CD4-positive, alpha-beta memory T cell (primary cell): ENCODE measurements at regions of chr1 and their contacts with region 1.

Region 1: DNA sequence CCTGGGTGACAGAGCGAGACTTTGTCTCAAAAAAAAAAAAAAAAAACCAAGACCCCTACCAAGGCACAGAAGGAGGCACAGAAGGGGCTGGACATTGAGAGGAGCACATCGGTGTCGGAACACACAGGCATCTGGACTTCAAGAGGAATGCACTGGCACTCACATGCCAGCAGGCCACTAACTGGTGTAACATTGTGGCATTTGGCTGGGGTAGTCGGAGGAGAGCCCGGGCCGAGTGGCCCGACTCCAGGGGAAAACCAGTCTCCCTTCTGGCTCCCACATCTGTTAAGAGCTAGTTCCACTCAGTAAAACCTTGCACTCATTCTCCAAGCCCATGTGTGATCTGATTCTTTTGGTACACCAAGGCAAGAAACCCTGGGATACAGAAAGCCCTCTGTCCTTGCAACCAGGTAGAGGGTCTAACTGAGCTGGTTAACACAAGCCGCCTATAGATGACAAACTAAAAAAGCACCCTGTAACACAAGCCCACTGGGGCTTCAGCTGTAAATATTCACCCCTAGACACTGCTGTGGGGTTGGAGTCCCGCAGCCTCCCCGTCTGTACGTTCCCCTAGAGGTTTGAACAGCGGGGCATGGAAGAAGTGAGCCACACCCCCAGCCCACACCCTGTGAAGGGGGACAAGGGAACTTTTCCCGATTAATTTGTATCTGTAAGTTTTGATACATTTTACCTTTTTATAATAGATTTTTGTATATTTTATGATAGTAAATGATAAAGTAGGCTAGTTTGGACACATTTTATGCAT is 17.2 kb upstream of the AKIRIN1 start:
- DNase-seq: no peak
- H3K4me3 ChIP-seq: no peak overlapping the region
- H3K4me3 Mint-ChIP-seq: no peak overlapping the region
- H3K27ac ChIP-seq: no peak overlapping the region
- H3K27ac Mint-ChIP-seq: peak overlapping the region in 1 of 7 donors; percentile 6
- H3K4me1 ChIP-seq: peaks cover 10% of the 10 kb centered on the region
- H3K4me1 Mint-ChIP-seq: peaks cover 12 to 24% (median 17%) of the 10 kb centered on the region in 4 donors
- H3K27me3 ChIP-seq: no peaks in the 10 kb centered on the region
- H3K27me3 Mint-ChIP-seq: peaks cover 0 to 2% of the 10 kb centered on the region in 2 donors

Region 2: GRCh38 chr1:38859561-38860453 is 114.0 kb before region 1 on chr1 and contains the start of gene RRAGC:
- CTCF ChIA-PET with region 1: no interaction called
- POLR2A ChIA-PET with region 1: interaction called, 9 read pairs
- intact Hi-C with region 1: loop called (anchors 1 kb)
- DNase-seq: peak; percentile 97 to 99 (median 97)
- H3K4me3 ChIP-seq: peak within 1 kb of the TSS; percentile 70 to 92
- H3K4me3 Mint-ChIP-seq: peak within 1 kb of the TSS; percentile 91 to 97 (median 96)
- H3K27ac ChIP-seq: peak within 1 kb of the TSS; percentile 65
- H3K27ac Mint-ChIP-seq: peak within 1 kb of the TSS; percentile 88 to 98 (median 94)
- H3K4me1 ChIP-seq: peaks cover 35% of the 10 kb centered on the region
- H3K4me1 Mint-ChIP-seq: peaks cover 37 to 77% (median 57%) of the 10 kb centered on the region in 4 donors
- H3K27me3 ChIP-seq: no peaks in the 10 kb centered on the region
- H3K27me3 Mint-ChIP-seq: no peaks in the 10 kb centered on the region
- total RNA-seq, gene RRAGC: 24.5 to 25.2 TPM

Region 3: GRCh38 chr1:38873027-38873969 is 100.5 kb before region 1 on chr1 and contains the start of gene MYCBP:
- CTCF ChIA-PET with region 1: no interaction called
- POLR2A ChIA-PET with region 1: interaction called, 8 read pairs
- intact Hi-C with region 1: loop called (anchors 5 kb)
- DNase-seq: peak; percentile 96 to 99 (median 98)
- H3K4me3 ChIP-seq: peak within 1 kb of the TSS; percentile 77 to 81
- H3K4me3 Mint-ChIP-seq: peak within 1 kb of the TSS; percentile 88 to 95 (median 92)
- H3K27ac ChIP-seq: peak within 1 kb of the TSS; percentile 79
- H3K27ac Mint-ChIP-seq: peak within 1 kb of the TSS; percentile 88 to 94 (median 93)
- H3K4me1 ChIP-seq: peaks cover 35% of the 10 kb centered on the region
- H3K4me1 Mint-ChIP-seq: peaks cover 16 to 34% (median 25%) of the 10 kb centered on the region in 4 donors
- H3K27me3 ChIP-seq: no peaks in the 10 kb centered on the region
- H3K27me3 Mint-ChIP-seq: no peaks in the 10 kb centered on the region
- total RNA-seq, gene MYCBP: 13.4 to 15.4 TPM

Region 4: DNA sequence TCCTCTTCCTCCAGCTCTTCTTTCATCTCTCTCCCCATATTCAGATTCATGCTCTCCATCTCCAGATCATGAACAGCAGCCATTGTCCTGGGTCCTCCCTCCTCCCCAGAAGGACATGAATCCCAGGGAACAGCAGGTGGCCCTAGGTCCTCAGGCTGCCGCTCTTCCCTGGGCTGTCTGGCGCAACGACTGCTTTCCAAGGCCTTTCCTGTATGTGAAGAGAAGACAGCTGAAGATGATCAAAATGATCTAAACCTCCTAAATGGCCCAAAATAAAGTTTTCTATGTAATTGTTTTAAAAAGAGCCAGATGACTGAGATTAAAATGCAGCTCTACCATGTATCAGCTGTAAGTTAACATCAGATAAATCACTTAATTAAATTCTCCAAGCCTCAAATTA is 54.7 kb before region 1 on chr1:
- CTCF ChIA-PET with region 1: no interaction called
- POLR2A ChIA-PET with region 1: no interaction called
- intact Hi-C with region 1: no loop called
- DNase-seq: no peak
- H3K4me3 ChIP-seq: no peak overlapping the region
- H3K4me3 Mint-ChIP-seq: no peak overlapping the region
- H3K27ac ChIP-seq: no peak overlapping the region
- H3K27ac Mint-ChIP-seq: peak overlapping the region in 1 of 7 donors; percentile 19
- H3K4me1 ChIP-seq: no peaks in the 10 kb centered on the region
- H3K4me1 Mint-ChIP-seq: peaks cover 0 to 1% (median 0%) of the 10 kb centered on the region in 4 donors
- H3K27me3 ChIP-seq: no peaks in the 10 kb centered on the region
- H3K27me3 Mint-ChIP-seq: no peaks in the 10 kb centered on the region

Region 5: GRCh38 chr1:38990738-38991639 is 17.1 kb after region 1 on chr1 and contains the start of gene AKIRIN1:
- CTCF ChIA-PET with region 1: interaction called, 5 read pairs
- POLR2A ChIA-PET with region 1: interaction called, 28 read pairs
- intact Hi-C with region 1: loop called (anchors 2 kb)
- DNase-seq: peak; percentile 87 to 95 (median 89)
- H3K4me3 ChIP-seq: peak within 1 kb of the TSS; percentile 52 to 67
- H3K4me3 Mint-ChIP-seq: peak within 1 kb of the TSS; percentile 88 to 94 (median 92)
- H3K27ac ChIP-seq: peak within 1 kb of the TSS; percentile 93
- H3K27ac Mint-ChIP-seq: peak within 1 kb of the TSS; percentile 87 to 93 (median 91)
- H3K4me1 ChIP-seq: peaks cover 47% of the 10 kb centered on the region
- H3K4me1 Mint-ChIP-seq: peaks cover 21 to 52% (median 37%) of the 10 kb centered on the region in 4 donors
- H3K27me3 ChIP-seq: no peaks in the 10 kb centered on the region
- H3K27me3 Mint-ChIP-seq: no peaks in the 10 kb centered on the region
- total RNA-seq, gene AKIRIN1: 79.6 to 84.9 TPM

Region 6: GRCh38 chr1:38997034-38997900 is 23.4 kb after region 1 on chr1:
- CTCF ChIA-PET with region 1: interaction called, 5 read pairs
- POLR2A ChIA-PET with region 1: interaction called, 28 read pairs
- intact Hi-C with region 1: loop called (anchors 2 kb)
- DNase-seq: peak in 4 of 5 donors; percentile 55 to 63 (median 60)
- H3K4me3 ChIP-seq: peak overlapping the region; percentile 3 to 11
- H3K4me3 Mint-ChIP-seq: peak overlapping the region; percentile 69 to 92 (median 86)
- H3K27ac ChIP-seq: peak overlapping the region; percentile 22
- H3K27ac Mint-ChIP-seq: peak overlapping the region; percentile 82 to 94 (median 91)
- H3K4me1 ChIP-seq: peaks cover 74% of the 10 kb centered on the region
- H3K4me1 Mint-ChIP-seq: peaks cover 40 to 82% (median 59%) of the 10 kb centered on the region in 4 donors
- H3K27me3 ChIP-seq: no peaks in the 10 kb centered on the region
- H3K27me3 Mint-ChIP-seq: no peaks in the 10 kb centered on the region